Heart right ventricle (tissue), 16 donors: ENCODE measurements at regions of chr4 and their contacts with region 1.

Region 1: GRCh38 chr4:43846111-43846587 is 602.5 kb downstream of the KCTD8 start:
- DNase-seq: peak in 1 of 2 donors; percentile 4
- ATAC-seq: no peak
- H3K4me3 ChIP-seq: no peak overlapping the region
- H3K27ac ChIP-seq: no peak overlapping the region
- H3K4me1 ChIP-seq: no peaks in the 10 kb centered on the region
- H3K27me3 ChIP-seq: no peaks in the 10 kb centered on the region
- CTCF ChIP-seq: no peak

Region 2: DNA sequence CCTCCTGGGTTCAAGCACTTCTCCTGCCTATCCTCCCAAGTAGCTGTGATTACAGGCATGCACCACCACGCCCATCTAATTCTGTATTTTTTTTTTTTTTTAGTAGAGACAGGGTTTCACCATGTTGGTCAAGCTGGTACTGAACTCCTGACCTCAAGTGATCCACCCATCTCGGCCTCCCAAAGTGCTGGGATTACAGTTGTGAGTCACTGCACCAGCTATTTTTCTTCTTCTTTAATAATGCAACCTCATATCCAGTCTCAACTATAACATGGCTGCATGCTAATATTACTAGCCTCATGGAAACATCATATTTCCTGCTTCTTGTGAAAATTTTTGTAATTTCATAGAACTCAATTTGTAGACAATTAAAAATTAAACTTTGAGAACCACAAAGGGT is 104.1 kb before region 1 on chr4:
- intact Hi-C with region 1: no loop called
- DNase-seq: no peak
- ATAC-seq: no peak
- H3K4me3 ChIP-seq: no peak overlapping the region
- H3K27ac ChIP-seq: no peak overlapping the region
- H3K4me1 ChIP-seq: no peaks in the 10 kb centered on the region
- H3K27me3 ChIP-seq: no peaks in the 10 kb centered on the region
- CTCF ChIP-seq: no peak

Region 3: GRCh38 chr4:43882470-43882869 is 36.3 kb after region 1 on chr4:
- intact Hi-C with region 1: loop called in 1 of 10 experiments (anchors 1 kb)
- DNase-seq: no peak
- ATAC-seq: no peak
- H3K4me3 ChIP-seq: no peak overlapping the region
- H3K27ac ChIP-seq: no peak overlapping the region
- H3K4me1 ChIP-seq: no peaks in the 10 kb centered on the region
- H3K27me3 ChIP-seq: no peaks in the 10 kb centered on the region
- CTCF ChIP-seq: no peak